Tibial artery (tissue), 4 donors: ENCODE measurements at regions of chr15 and their contacts with region 1.

Region 1: GRCh38 chr15:75302318-75302717 is 19.7 kb downstream of the GOLGA6D start:
- DNase-seq: no peak
- H3K4me3 ChIP-seq: no peak overlapping the region
- H3K27ac ChIP-seq: no peak overlapping the region
- H3K4me1 ChIP-seq: no peaks in the 10 kb centered on the region
- H3K27me3 ChIP-seq: peaks cover 0 to 28% of the 10 kb centered on the region in 2 donors
- CTCF ChIP-seq: no peak

Region 2: DNA sequence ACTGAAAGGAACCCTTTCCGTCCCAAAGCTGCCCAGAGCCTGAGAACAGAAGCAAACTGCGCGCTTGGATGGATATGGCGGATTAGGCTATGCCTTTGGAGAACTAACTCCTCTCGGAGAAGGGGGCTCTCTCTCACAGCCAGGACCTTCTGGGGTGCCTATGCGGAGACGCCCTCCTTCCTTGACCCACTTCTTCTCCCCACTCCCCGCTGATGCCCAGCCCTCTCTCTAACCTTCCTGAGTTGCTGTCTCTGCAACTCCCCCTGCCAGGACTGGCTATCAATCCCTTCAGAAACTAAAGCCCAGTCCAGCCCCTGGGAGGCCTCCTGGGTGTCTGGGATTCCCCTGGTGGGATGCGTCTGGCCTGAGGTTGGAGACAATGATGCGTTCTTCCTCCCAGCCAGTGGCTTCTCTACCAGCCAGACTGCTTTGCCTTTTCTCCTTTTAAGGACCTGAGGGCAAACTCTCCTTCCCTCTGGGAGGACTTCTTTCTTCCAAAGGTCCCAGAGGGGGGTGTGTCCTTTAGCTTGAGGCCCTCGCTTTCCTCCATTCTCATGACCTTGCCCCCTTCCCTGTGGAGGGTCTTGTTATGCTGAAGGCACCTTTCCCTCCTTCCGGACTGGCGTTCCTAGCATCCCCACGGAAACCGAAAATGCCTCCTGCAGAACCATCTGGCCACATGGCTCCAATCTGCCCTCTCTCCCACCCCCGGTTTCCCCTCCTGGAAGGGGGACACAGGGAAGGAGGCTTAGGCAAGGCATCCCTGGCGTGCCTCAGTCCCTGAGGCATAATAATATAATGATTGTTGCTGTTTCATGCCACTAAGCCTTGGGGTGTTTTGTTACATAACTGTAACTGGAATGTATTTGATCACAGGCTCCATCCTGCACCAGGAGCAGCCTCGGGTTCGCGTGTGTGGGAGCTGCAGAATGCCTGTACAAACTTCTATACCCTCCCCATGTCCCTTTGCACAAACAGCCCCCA is 164.0 kb before region 1 on chr15:
- intact Hi-C with region 1: no loop called
- DNase-seq: no peak
- H3K4me3 ChIP-seq: no peak overlapping the region
- H3K27ac ChIP-seq: peak overlapping the region in 1 of 2 donors; percentile 7
- H3K4me1 ChIP-seq: peaks cover 0 to 8% (median 5%) of the 10 kb centered on the region in 4 donors
- H3K27me3 ChIP-seq: no peaks in the 10 kb centered on the region
- CTCF ChIP-seq: no peak

Region 3: GRCh38 chr15:75237316-75237982 is 64.9 kb before region 1 on chr15:
- intact Hi-C with region 1: loop called (anchors 5 kb)
- DNase-seq: peak; percentile 15 to 46
- H3K4me3 ChIP-seq: no peak overlapping the region
- H3K27ac ChIP-seq: no peak overlapping the region
- H3K4me1 ChIP-seq: no peaks in the 10 kb centered on the region
- H3K27me3 ChIP-seq: peaks cover 0 to 54% of the 10 kb centered on the region in 2 donors
- CTCF ChIP-seq: no peak

Region 4: GRCh38 chr15:75335705-75336355 is 33.5 kb after region 1 on chr15 and contains the start of gene COMMD4:
- intact Hi-C with region 1: no loop called
- DNase-seq: peak; percentile 97
- H3K4me3 ChIP-seq: peak within 1 kb of the TSS; percentile 63 to 74
- H3K27ac ChIP-seq: peak within 1 kb of the TSS; percentile 55 to 76
- H3K4me1 ChIP-seq: peaks cover 0 to 12% (median 9%) of the 10 kb centered on the region in 4 donors
- H3K27me3 ChIP-seq: no peaks in the 10 kb centered on the region
- CTCF ChIP-seq: no peak